Right ventricle myocardium superior (tissue), 1 donor: ENCODE measurements at regions of chr6 and their contacts with region 1.

Region 1: DNA sequence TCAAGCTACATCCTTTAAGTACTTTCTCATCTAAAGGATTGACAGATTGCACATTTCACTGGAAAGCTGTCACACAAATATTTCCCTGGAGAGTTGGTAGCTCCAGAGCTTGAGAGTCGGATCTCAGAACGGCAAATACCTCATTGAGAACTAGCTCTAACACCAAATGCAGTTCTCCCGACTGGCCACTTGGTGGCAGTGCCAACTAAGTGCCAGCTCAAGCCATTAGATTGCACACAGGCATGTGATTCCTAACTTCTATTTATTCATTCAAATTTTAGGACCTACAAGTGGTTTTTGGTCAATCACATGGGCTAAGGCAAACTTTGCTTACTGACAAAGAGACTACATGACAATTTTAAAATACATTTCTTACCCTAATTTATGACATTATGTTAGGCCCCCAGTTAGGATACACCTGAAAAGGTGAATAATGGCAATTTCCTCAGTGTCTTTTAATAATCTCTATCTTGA is 7.9 kb upstream of the MCHR2 start:
- DNase-seq: peak; percentile 40
- ATAC-seq: peak; percentile 55

Region 2: GRCh38 chr6:100657678-100658330 is 655.9 kb after region 1 on chr6:
- intact Hi-C with region 1: loop called (anchors 10 kb)
- DNase-seq: no peak
- ATAC-seq: no peak